ENCODE measurements at regions of chr3 and their contacts with region 1.

Region 1: DNA sequence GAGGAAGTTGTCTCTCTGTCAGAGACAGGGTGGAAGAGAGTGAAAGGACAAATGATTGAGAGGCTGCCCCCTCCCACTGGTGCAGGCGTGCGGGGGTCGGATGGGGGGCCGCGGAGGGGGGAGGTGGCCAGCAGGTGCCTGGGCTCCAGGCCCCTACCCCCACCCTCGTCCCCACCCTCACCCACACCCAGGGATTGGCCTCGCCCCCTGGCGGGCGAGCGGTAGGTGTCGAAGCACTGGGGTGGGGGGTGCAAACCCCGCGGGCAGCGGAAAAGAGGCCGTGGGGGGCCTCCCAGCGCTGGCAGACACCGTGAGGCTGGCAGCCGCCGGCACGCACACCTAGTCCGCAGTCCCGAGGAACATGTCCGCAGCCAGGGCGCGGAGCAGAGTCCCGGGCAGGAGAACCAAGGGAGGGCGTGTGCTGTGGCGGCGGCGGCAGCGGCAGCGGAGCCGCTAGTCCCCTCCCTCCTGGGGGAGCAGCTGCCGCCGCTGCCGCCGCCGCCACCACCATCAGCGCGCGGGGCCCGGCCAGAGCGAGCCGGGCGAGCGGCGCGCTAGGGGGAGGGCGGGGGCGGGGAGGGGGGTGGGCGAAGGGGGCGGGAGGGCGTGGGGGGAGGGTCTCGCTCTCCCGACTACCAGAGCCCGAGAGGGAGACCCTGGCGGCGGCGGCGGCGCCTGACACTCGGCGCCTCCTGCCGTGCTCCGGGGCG is at the start of gene KAT2B:
- DNase-seq: peak; percentile 71 to 79
- ATAC-seq: peak; percentile 62 to 71
- H3K4me3 ChIP-seq: peak within 1 kb of the TSS; percentile 79 to 94 (median 90)
- H3K27ac ChIP-seq: peak within 1 kb of the TSS; percentile 95 to 99 (median 99)
- H3K4me1 ChIP-seq: peaks cover 25 to 35% of the 10 kb centered on the region in 2 donors
- H3K27me3 ChIP-seq: no peaks in the 10 kb centered on the region
- CTCF ChIP-seq: peak; percentile 47 to 88 (median 74)
- POLR2A ChIP-seq: peak; percentile 33 to 75
- total RNA-seq, gene KAT2B: 39.4 to 87.3 (median 61.1) TPM

Region 2: DNA sequence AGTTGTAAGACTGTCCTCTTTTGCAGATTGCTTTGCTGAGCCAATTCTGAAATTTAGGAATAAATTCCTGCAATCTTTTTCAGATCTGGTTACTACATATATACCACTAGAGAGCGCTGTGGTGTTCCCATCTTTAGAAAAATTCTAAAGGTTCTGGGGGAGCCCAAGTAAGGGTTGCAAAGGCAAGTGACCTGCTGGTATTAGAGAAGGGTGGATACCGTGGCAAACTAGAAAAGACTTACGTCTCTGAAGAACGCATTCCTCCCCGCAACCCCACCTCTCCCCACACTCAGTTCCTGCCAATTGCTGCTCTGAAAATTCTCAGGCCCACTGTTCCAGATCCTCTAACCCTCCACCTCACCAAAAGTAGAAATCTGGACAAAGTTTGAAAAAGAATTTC is 154.5 kb before region 1 on chr3:
- in situ Hi-C with region 1: no loop called
- intact Hi-C with region 1: loop called (anchors 5 kb)
- DNase-seq: no peak
- ATAC-seq: no peak
- H3K4me3 ChIP-seq: no peak overlapping the region
- H3K27ac ChIP-seq: no peak overlapping the region
- H3K4me1 ChIP-seq: no peaks in the 10 kb centered on the region
- H3K27me3 ChIP-seq: no peaks in the 10 kb centered on the region
- CTCF ChIP-seq: peak in 4 of 5 experiments; percentile 19 to 56 (median 32)
- POLR2A ChIP-seq: no peak

Region 3: GRCh38 chr3:19946832-19947548 is 92.9 kb before region 1 on chr3 and contains the start of gene RAB5A:
- in situ Hi-C with region 1: loop called (anchors 5 to 10 kb)
- intact Hi-C with region 1: loop called (anchors 1 kb)
- DNase-seq: peak; percentile 97
- ATAC-seq: peak; percentile 97
- H3K4me3 ChIP-seq: peak within 1 kb of the TSS; percentile 74 to 95 (median 84)
- H3K27ac ChIP-seq: peak within 1 kb of the TSS; percentile 94 to 97 (median 96)
- H3K4me1 ChIP-seq: peaks cover 24 to 31% of the 10 kb centered on the region in 2 donors
- H3K27me3 ChIP-seq: no peaks in the 10 kb centered on the region
- CTCF ChIP-seq: peak in 3 of 5 experiments; percentile 11 to 47 (median 41)
- POLR2A ChIP-seq: peak; percentile 88 to 91
- total RNA-seq, gene RAB5A: 30.9 to 43.7 (median 35.5) TPM

Region 4: GRCh38 chr3:20054549-20054987 is 14.6 kb after region 1 on chr3:
- in situ Hi-C with region 1: no loop called
- intact Hi-C with region 1: loop called (anchors 2 kb)
- DNase-seq: peak; percentile 89
- ATAC-seq: peak; percentile 90 to 91
- H3K4me3 ChIP-seq: no peak overlapping the region
- H3K27ac ChIP-seq: peak overlapping the region; percentile 80 to 86 (median 84)
- H3K4me1 ChIP-seq: peaks cover 42 to 45% of the 10 kb centered on the region in 2 donors
- H3K27me3 ChIP-seq: no peaks in the 10 kb centered on the region
- CTCF ChIP-seq: no peak
- POLR2A ChIP-seq: no peak

Region 5: GRCh38 chr3:20080956-20081554 is 41.1 kb after region 1 on chr3:
- in situ Hi-C with region 1: no loop called
- intact Hi-C with region 1: loop called (anchors 1 kb)
- DNase-seq: peak; percentile 94 to 98
- ATAC-seq: peak; percentile 99 to 100
- H3K4me3 ChIP-seq: no peak overlapping the region
- H3K27ac ChIP-seq: peak overlapping the region; percentile 68 to 85 (median 80)
- H3K4me1 ChIP-seq: peaks cover 21 to 25% of the 10 kb centered on the region in 2 donors
- H3K27me3 ChIP-seq: no peaks in the 10 kb centered on the region
- CTCF ChIP-seq: no peak
- POLR2A ChIP-seq: peak; percentile 27 to 72

Region 6: GRCh38 chr3:20091331-20091730 is 51.4 kb after region 1 on chr3:
- in situ Hi-C with region 1: no loop called
- intact Hi-C with region 1: no loop called
- DNase-seq: no peak
- ATAC-seq: no peak
- H3K4me3 ChIP-seq: no peak overlapping the region
- H3K27ac ChIP-seq: no peak overlapping the region
- H3K4me1 ChIP-seq: peaks cover 4 to 6% of the 10 kb centered on the region in 2 donors
- H3K27me3 ChIP-seq: no peaks in the 10 kb centered on the region
- CTCF ChIP-seq: no peak
- POLR2A ChIP-seq: no peak

Region 7: GRCh38 chr3:20185701-20186598 is 146.0 kb after region 1 on chr3 and contains the start of gene SGO1:
- in situ Hi-C with region 1: loop called in 2 of 4 experiments (anchors 10 kb)
- intact Hi-C with region 1: loop called (anchors 1 kb)
- DNase-seq: peak; percentile 97 to 98
- ATAC-seq: peak; percentile 97 to 98
- H3K4me3 ChIP-seq: peak within 1 kb of the TSS; percentile 69 to 81 (median 72)
- H3K27ac ChIP-seq: peak within 1 kb of the TSS; percentile 86 to 94 (median 92)
- H3K4me1 ChIP-seq: peaks cover 14 to 22% of the 10 kb centered on the region in 2 donors
- H3K27me3 ChIP-seq: no peaks in the 10 kb centered on the region
- CTCF ChIP-seq: peak in 2 of 5 experiments; percentile 18 to 33
- POLR2A ChIP-seq: peak; percentile 73 to 84
- total RNA-seq, gene SGO1: 0.18 TPM in 1 of 4 donors, not detected in the others

Measured in gastrocnemius medialis (tissue), 4 donors.